CD8-positive, alpha-beta T cell (primary cell): ENCODE measurements at regions of chr14 and their contacts with region 1.

Region 1: GRCh38 chr14:48983351-48983888 is 602.8 kb downstream of the RPS29 start:
- DNase-seq: no peak
- ATAC-seq: no peak
- H3K4me3 ChIP-seq: no peak overlapping the region
- H3K4me3 Mint-ChIP-seq: no peak overlapping the region
- H3K27ac ChIP-seq: no peak overlapping the region
- H3K27ac Mint-ChIP-seq: no peak overlapping the region
- H3K4me1 ChIP-seq: no peaks in the 10 kb centered on the region
- H3K4me1 Mint-ChIP-seq: no peaks in the 10 kb centered on the region
- H3K27me3 ChIP-seq: no peaks in the 10 kb centered on the region
- H3K27me3 Mint-ChIP-seq: no peaks in the 10 kb centered on the region
- CTCF ChIP-seq: no peak

Region 2: GRCh38 chr14:48970803-48971394 is 12.5 kb before region 1 on chr14:
- CTCF ChIA-PET with region 1: no interaction called
- POLR2A ChIA-PET with region 1: no interaction called
- intact Hi-C with region 1: loop called in 1 of 2 experiments (anchors 1 kb)
- DNase-seq: no peak
- ATAC-seq: no peak
- H3K4me3 ChIP-seq: no peak overlapping the region
- H3K4me3 Mint-ChIP-seq: no peak overlapping the region
- H3K27ac ChIP-seq: no peak overlapping the region
- H3K27ac Mint-ChIP-seq: no peak overlapping the region
- H3K4me1 ChIP-seq: no peaks in the 10 kb centered on the region
- H3K4me1 Mint-ChIP-seq: no peaks in the 10 kb centered on the region
- H3K27me3 ChIP-seq: no peaks in the 10 kb centered on the region
- H3K27me3 Mint-ChIP-seq: peaks cover 2% of the 10 kb centered on the region
- CTCF ChIP-seq: no peak